ENCODE measurements at regions of chr5 and their contacts with region 1.

Region 1: DNA sequence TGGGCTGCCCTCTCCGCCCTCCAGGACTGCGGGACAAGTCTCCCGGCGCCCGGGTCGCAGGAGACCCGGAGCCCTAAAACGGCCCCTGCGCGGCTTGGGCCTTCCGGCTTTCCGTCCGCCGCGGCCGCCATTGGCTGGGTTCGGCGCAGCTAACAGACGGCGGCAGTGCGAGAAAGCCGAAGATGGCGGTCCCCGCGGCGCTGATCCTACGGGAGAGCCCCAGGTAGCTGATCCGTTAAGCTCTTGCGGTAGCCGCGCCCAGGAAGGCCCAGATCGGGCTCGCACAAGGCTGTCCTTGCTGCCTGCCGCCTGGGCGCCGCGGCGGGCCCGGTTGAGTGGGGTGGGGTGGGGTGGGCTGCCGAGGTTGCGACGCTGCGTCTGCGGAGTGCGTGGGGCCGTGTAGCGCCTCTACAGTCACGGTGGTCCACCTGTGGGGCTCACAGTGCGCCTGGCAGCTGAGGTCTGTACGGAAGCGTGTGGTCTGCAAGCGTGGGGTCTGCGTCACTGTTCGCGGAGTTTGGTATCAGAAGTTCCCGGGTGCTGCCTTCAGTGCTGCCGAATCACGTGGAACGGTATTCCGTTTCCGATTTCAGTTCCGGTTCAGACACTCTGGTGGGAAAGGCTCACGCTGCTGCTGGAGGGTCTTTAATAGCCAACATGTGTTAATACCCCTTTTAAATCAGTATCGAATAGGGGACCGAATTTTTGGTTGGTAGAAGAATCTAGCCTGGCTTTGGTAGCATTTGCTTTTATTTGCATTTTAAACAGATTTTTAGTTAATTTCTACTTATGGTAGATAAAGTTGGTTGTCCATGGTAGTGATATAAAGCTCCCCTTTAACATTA is at the start of gene COMMD10:
- DNase-seq: peak; percentile 59 to 78
- ATAC-seq: peak; percentile 95 to 99
- H3K4me3 ChIP-seq: peak within 1 kb of the TSS; percentile 88 to 98 (median 94)
- H3K27ac ChIP-seq: peak within 1 kb of the TSS; percentile 89 to 96 (median 95)
- H3K4me1 ChIP-seq: peaks cover 20 to 22% of the 10 kb centered on the region in 2 donors
- H3K27me3 ChIP-seq: no peaks in the 10 kb centered on the region
- CTCF ChIP-seq: no peak
- POLR2A ChIP-seq: peak; percentile 55 to 64
- total RNA-seq, gene COMMD10: 10.6 to 34.6 (median 15.2) TPM

Region 2: GRCh38 chr5:115296124-115297022 is 788.7 kb before region 1 on chr5 and contains the start of gene CCDC112:
- in situ Hi-C with region 1: loop called in 1 of 4 experiments (anchors 25 kb)
- intact Hi-C with region 1: no loop called
- DNase-seq: peak; percentile 45 to 55
- ATAC-seq: peak; percentile 67 to 81
- H3K4me3 ChIP-seq: peak within 1 kb of the TSS; percentile 71 to 91 (median 79)
- H3K27ac ChIP-seq: peak within 1 kb of the TSS in 3 of 4 donors; percentile 32 to 61 (median 39)
- H3K4me1 ChIP-seq: peaks cover 7 to 9% of the 10 kb centered on the region in 2 donors
- H3K27me3 ChIP-seq: no peaks in the 10 kb centered on the region
- CTCF ChIP-seq: no peak
- POLR2A ChIP-seq: peak in 1 of 2 donors; percentile 37
- total RNA-seq, gene CCDC112: 2.1 to 4.8 (median 3.8) TPM

Region 3: DNA sequence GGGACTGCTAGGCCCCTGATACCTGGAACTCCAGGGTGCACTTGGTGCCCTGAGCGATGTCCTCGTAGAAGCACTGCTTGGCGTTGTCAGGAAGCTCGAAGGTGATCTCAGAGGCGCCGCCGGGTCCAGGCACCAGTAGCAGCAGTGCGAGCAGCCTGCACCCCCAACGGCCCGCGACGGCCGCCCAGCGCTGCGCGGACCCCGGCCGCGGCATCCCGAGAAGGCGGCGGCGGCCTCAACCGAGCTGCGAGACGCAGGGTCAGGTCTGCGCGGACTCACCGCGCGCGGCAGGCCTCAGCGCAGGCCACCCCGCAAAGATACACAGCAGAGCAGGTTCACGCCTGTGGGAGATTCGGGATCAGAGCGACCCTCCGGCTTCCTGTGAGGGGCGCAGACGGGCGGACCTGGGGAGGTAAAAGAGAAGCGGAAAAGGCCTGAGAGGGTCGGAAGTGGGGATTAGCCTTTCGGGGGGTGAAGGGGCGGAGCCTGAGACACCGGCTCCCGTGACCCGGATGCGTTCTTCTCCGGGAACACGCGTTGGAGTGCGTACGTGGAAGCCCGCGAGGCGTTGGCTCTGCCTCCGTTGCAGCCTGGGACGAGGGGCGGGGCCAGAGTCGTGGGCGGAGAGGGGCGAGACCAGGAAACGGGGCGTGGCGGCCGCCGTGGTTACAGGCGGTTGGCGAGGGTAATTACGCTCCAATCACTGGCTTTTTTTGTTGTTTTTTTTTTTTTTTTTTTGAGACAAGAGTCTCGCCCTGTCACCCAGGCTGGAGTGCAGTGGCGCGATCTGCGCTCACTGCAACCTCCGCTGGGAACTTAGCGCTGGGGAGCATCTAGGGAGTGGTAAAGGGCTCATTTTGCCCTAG is 459.3 kb before region 1 on chr5 and contains the start of gene TMED7:
- in situ Hi-C with region 1: no loop called
- intact Hi-C with region 1: loop called (anchors 5 kb)
- DNase-seq: peak; percentile 99
- ATAC-seq: peak; percentile 97
- H3K4me3 ChIP-seq: peak within 1 kb of the TSS; percentile 75 to 99 (median 84)
- H3K27ac ChIP-seq: peak within 1 kb of the TSS; percentile 87 to 97 (median 95)
- H3K4me1 ChIP-seq: peaks cover 35% of the 10 kb centered on the region in 2 donors
- H3K27me3 ChIP-seq: no peaks in the 10 kb centered on the region
- CTCF ChIP-seq: peak in 2 of 5 experiments; percentile 12 to 38
- POLR2A ChIP-seq: peak; percentile 83 to 92
- total RNA-seq, gene TMED7: 53.1 to 122 (median 68.6) TPM

Measured in gastrocnemius medialis (tissue), 4 donors.